T-cell (primary cell): ENCODE measurements at regions of chr14 and their contacts with region 1.

Region 1: DNA sequence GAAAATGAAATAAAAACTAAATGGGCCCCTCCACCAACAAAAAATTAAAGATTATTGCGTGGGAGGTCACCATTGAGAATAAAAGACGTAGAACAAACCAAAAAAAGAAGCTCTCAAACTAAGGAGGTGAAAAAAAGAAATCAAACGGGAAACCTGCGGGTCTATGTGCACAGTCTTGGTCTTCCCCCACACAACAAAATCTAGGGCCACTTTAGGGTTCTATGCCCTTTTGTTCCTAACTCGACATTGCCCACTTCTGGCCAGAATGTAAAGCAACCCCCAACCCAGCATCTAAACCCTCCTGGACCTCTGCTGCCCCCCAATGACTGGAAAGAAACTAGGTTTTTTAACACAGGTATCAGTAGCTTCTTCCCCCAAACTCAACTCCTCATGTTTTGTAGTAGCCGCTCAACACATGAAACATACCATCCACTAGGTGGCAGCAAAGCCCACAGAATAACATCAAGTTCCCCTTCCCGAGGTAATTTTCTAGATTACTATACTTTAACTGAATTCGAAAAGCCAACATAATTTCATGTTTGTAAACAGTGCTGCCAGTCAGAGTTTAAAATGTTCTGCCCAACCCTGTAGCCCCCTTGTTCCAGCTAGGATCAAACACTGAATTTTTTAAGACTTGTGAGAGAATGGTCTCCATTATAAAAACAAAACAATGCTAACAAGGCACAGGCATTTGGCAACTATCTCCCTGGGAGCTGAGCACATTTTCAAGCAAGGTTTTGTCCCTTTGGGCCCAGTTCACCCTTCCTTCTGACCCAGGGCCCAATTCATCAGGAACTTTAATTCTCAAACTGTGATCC is 18.7 kb downstream of the DAD1 start:
- DNase-seq: peak; percentile 62 to 98 (median 86)
- ATAC-seq: peak; percentile 86 to 90 (median 90)
- H3K4me3 ChIP-seq: peak overlapping the region; percentile 41 to 48
- H3K4me3 Mint-ChIP-seq: peak overlapping the region; percentile 64 to 77 (median 75)
- H3K27ac ChIP-seq: peak overlapping the region; percentile 99
- H3K27ac Mint-ChIP-seq: peak overlapping the region; percentile 98 to 99
- H3K4me1 ChIP-seq: peaks cover 40 to 41% of the 10 kb centered on the region in 2 experiments
- H3K4me1 Mint-ChIP-seq: peaks cover 44 to 69% (median 67%) of the 10 kb centered on the region in 3 donors
- H3K27me3 ChIP-seq: no peaks in the 10 kb centered on the region
- H3K27me3 Mint-ChIP-seq: no peaks in the 10 kb centered on the region

Region 2: DNA sequence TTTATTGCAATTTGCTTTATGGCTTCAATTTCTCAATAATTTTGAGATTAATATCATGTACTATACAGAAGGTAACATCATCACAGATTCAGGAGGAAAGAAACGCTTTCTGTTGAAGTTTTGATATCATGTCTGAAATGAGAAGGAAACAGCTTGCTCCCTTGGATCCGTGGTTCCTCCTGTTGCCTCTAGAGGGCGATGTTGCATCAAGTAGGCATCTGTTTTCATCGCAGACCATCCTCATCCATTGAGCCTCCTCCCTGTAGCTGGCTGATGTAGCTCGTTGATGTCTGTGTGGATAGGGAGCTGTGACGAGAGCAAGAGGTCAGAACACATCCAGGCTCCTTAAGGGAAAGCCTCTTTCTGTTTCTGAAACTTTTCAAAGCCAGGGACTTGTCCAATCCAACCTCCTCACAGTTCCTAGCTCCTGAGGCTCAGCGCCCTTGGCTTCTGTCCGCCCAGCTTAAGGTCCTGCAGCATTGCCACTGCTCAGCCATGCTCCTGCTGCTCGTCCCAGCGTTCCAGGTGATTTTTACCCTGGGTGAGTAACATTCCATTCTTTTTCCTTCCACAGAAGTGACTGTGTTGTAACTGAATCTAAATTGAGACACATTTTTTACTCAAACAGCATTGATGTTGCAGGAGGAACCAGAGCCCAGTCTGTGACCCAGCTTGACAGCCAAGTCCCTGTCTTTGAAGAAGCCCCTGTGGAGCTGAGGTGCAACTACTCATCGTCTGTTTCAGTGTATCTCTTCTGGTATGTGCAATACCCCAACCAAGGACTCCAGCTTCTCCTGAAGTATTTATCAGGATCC is 592.0 kb before region 1 on chr14:
- CTCF ChIA-PET with region 1: interaction called, 3 to 11 read pairs
- POLR2A ChIA-PET with region 1: no interaction called
- DNase-seq: peak in 34 of 35 experiments; percentile 22 to 80 (median 50)
- ATAC-seq: peak; percentile 71 to 81 (median 76)
- H3K4me3 ChIP-seq: peak overlapping the region in 1 of 2 donors; percentile 31
- H3K4me3 Mint-ChIP-seq: peak overlapping the region; percentile 65 to 69 (median 68)
- H3K27ac ChIP-seq: peak overlapping the region; percentile 29
- H3K27ac Mint-ChIP-seq: peak overlapping the region; percentile 78 to 83
- H3K4me1 ChIP-seq: peaks cover 0 to 6% of the 10 kb centered on the region in 2 experiments
- H3K4me1 Mint-ChIP-seq: peaks cover 22 to 31% (median 28%) of the 10 kb centered on the region in 3 donors
- H3K27me3 ChIP-seq: no peaks in the 10 kb centered on the region
- H3K27me3 Mint-ChIP-seq: peaks cover 3 to 7% of the 10 kb centered on the region in 2 donors

Region 3: DNA sequence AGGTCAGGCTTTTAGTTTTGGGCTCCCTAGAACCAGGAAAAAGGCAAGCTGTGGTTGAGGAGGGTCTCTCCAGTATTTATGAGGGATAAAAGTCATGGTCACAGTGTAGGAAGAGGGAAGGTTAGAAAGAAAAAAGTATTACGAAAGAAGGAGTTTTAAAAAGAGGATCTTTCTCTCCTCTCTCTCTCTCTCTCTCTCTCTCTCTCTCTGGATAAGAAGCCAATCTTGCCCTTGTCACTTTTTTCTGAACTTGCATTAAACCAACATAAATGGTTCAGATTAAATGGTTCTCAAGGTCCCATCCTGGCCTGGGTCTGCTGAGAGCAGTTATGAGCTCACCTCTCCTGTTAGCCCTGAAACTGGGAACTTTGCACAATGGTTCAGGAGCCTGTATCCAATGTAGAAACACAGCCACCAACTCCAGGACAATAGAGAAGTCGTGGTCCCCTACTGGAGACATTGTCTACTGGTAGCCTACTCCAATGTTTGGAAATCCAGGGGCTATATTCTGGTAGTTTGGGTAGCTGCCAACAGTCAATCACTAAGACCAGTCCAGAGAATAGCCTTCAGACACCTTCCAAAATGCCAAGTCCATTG is 113.2 kb before region 1 on chr14:
- CTCF ChIA-PET with region 1: no interaction called
- POLR2A ChIA-PET with region 1: no interaction called
- DNase-seq: no peak
- ATAC-seq: no peak
- H3K4me3 ChIP-seq: no peak overlapping the region
- H3K4me3 Mint-ChIP-seq: peak overlapping the region in 2 of 3 donors; percentile 46 to 67
- H3K27ac ChIP-seq: no peak overlapping the region
- H3K27ac Mint-ChIP-seq: no peak overlapping the region
- H3K4me1 ChIP-seq: no peaks in the 10 kb centered on the region
- H3K4me1 Mint-ChIP-seq: peaks cover 0 to 5% (median 0%) of the 10 kb centered on the region in 3 donors
- H3K27me3 ChIP-seq: no peaks in the 10 kb centered on the region
- H3K27me3 Mint-ChIP-seq: no peaks in the 10 kb centered on the region

Region 4: GRCh38 chr14:22556990-22557623 is 13.2 kb before region 1 on chr14:
- CTCF ChIA-PET with region 1: interaction called, 18 to 176 read pairs
- POLR2A ChIA-PET with region 1: interaction called, 5 to 13 read pairs
- DNase-seq: peak; percentile 69 to 96 (median 89)
- ATAC-seq: peak; percentile 21 to 38 (median 29)
- H3K4me3 ChIP-seq: peak overlapping the region; percentile 47 to 58
- H3K4me3 Mint-ChIP-seq: peak overlapping the region; percentile 64 to 83 (median 79)
- H3K27ac ChIP-seq: peak overlapping the region; percentile 99
- H3K27ac Mint-ChIP-seq: peak overlapping the region; percentile 98 to 99
- H3K4me1 ChIP-seq: peaks cover 66 to 100% of the 10 kb centered on the region in 2 experiments
- H3K4me1 Mint-ChIP-seq: peaks cover 90 to 96% (median 91%) of the 10 kb centered on the region in 3 donors
- H3K27me3 ChIP-seq: no peaks in the 10 kb centered on the region
- H3K27me3 Mint-ChIP-seq: peaks cover 0 to 2% of the 10 kb centered on the region in 2 donors

Region 5: GRCh38 chr14:22641846-22642245 is 71.5 kb after region 1 on chr14:
- CTCF ChIA-PET with region 1: interaction called in 1 of 2 experiments, 6 read pairs
- POLR2A ChIA-PET with region 1: interaction called, 7 to 10 read pairs
- DNase-seq: no peak
- ATAC-seq: no peak
- H3K4me3 ChIP-seq: no peak overlapping the region
- H3K4me3 Mint-ChIP-seq: no peak overlapping the region
- H3K27ac ChIP-seq: no peak overlapping the region
- H3K27ac Mint-ChIP-seq: no peak overlapping the region
- H3K4me1 ChIP-seq: no peaks in the 10 kb centered on the region
- H3K4me1 Mint-ChIP-seq: peaks cover 0 to 5% (median 3%) of the 10 kb centered on the region in 3 donors
- H3K27me3 ChIP-seq: peaks cover 0 to 3% of the 10 kb centered on the region in 2 experiments
- H3K27me3 Mint-ChIP-seq: no peaks in the 10 kb centered on the region

Region 6: GRCh38 chr14:22852940-22853767 is 282.8 kb after region 1 on chr14:
- CTCF ChIA-PET with region 1: interaction called, 11 to 29 read pairs
- POLR2A ChIA-PET with region 1: interaction called in 1 of 2 experiments, 8 read pairs
- DNase-seq: peak; percentile 64 to 95 (median 86)
- ATAC-seq: peak; percentile 90 to 92 (median 91)
- H3K4me3 ChIP-seq: peak overlapping the region; percentile 74 to 81
- H3K4me3 Mint-ChIP-seq: peak overlapping the region; percentile 75 to 79 (median 78)
- H3K27ac ChIP-seq: peak overlapping the region; percentile 25
- H3K27ac Mint-ChIP-seq: peak overlapping the region; percentile 66 to 79
- H3K4me1 ChIP-seq: peaks cover 3 to 18% of the 10 kb centered on the region in 2 experiments
- H3K4me1 Mint-ChIP-seq: peaks cover 6 to 25% (median 23%) of the 10 kb centered on the region in 3 donors
- H3K27me3 ChIP-seq: peaks cover 0 to 45% of the 10 kb centered on the region in 2 experiments
- H3K27me3 Mint-ChIP-seq: peaks cover 6 to 9% of the 10 kb centered on the region in 2 donors

Region 7: GRCh38 chr14:22918804-22919600 is 348.7 kb after region 1 on chr14 and contains the start of gene RBM23:
- CTCF ChIA-PET with region 1: interaction called in 1 of 2 experiments, 15 read pairs
- POLR2A ChIA-PET with region 1: no interaction called
- DNase-seq: peak; percentile 98 to 100 (median 100)
- ATAC-seq: peak; percentile 89 to 95 (median 94)
- H3K4me3 ChIP-seq: peak within 1 kb of the TSS; percentile 96 to 99
- H3K4me3 Mint-ChIP-seq: peak within 1 kb of the TSS; percentile 95 to 97 (median 96)
- H3K27ac ChIP-seq: peak within 1 kb of the TSS; percentile 99
- H3K27ac Mint-ChIP-seq: peak within 1 kb of the TSS; percentile 100
- H3K4me1 ChIP-seq: peaks cover 6 to 28% of the 10 kb centered on the region in 2 experiments
- H3K4me1 Mint-ChIP-seq: peaks cover 46 to 50% (median 48%) of the 10 kb centered on the region in 3 donors
- H3K27me3 ChIP-seq: no peaks in the 10 kb centered on the region
- H3K27me3 Mint-ChIP-seq: peaks cover 0 to 4% of the 10 kb centered on the region in 2 donors
- total RNA-seq, gene RBM23: 88.7 to 102 (median 94.7) TPM

Region 8: GRCh38 chr14:23512156-23512555 is 941.8 kb after region 1 on chr14:
- CTCF ChIA-PET with region 1: no interaction called
- POLR2A ChIA-PET with region 1: no interaction called
- DNase-seq: peak in 23 of 35 experiments; percentile 2 to 38 (median 15)
- ATAC-seq: peak in 3 of 4 experiments; percentile 46 to 79 (median 61)
- H3K4me3 ChIP-seq: peak overlapping the region; percentile 14 to 34
- H3K4me3 Mint-ChIP-seq: peak overlapping the region; percentile 64 to 76 (median 74)
- H3K27ac ChIP-seq: no peak overlapping the region
- H3K27ac Mint-ChIP-seq: peak overlapping the region; percentile 9 to 62
- H3K4me1 ChIP-seq: peaks cover 2 to 14% of the 10 kb centered on the region in 2 experiments
- H3K4me1 Mint-ChIP-seq: peaks cover 9 to 18% (median 11%) of the 10 kb centered on the region in 3 donors
- H3K27me3 ChIP-seq: no peaks in the 10 kb centered on the region
- H3K27me3 Mint-ChIP-seq: no peaks in the 10 kb centered on the region